ENCODE measurements at regions of chr7 and their contacts with region 1.

Region 1: DNA sequence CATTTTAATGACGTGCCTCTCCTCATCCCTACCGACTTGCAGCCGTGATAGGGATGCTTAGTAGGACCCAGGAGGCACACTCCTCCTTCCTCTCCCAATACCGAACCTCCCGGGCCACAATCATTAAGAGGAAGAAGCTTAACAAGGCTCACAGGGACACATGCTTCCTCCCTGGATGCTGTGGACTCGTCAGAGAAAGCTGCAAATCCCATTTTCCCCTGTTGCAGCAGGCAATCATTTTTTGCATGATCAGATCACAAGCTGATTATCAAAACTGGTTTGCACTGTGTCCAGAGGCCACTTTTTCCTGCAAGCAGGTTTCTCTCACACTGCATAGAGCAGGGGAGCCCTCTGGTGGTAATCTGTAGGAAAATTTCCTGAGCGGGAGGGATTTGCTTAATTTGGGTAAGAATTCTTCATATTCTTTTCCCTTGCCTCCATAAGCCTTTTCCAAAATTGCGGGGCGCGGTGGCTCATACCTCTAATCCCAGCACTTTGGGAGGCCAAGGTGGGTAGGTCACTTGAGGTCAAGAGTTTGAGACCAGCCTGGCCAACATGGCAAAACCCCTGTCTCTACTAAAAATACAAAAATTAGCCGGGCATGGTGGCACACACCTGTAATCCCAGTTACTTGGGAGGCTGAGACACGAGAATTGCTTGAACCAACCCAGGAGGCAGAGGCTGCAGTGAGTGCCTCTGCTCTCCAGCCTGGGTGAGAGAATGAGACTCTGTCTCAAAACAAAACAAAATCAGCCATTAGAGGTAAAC is 16.1 kb upstream of the LAMB4 start:
- DNase-seq: no peak

Region 2: DNA sequence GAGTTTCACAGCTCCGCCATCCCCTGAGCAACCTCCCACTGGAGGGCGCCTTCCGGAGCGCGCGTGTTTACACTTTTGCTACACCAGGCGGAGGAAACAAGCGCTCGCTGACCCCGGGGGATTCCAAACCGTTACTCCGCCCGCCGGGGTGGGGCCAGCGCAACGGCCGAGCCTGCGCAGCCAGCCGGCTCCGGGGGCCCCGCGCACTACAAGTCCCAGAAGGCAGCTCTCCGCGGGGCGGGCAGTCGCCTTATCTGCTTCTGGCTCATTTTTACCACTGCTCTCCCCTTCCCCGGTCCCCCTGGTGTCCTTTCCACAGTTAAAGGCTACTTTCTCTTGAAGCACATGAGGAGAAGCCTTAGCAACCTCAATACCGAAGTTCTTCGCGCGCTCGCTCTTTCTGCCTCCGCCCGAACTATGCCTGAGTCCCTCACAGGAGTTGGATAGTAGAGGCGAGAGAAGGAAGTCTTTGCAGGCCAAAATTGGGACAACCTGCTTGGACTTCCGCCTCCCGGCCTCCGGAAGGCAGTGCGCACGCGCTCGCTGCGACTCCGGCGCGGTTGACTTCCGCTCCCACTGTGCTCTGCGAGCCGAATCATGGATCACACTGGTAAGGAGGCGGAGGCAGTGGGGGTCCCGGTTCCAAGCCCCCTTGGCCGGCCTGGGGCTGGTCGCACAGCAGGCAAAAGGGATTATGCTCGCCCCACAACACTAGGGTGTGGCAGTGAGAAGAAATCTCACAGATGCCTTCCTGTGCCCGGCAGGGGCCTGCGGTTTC is 402.5 kb before region 1 on chr7 and contains the start of gene CBLL1:
- intact Hi-C with region 1: loop called (anchors 10 kb)
- DNase-seq: peak; percentile 98
- total RNA-seq, gene CBLL1: 24.1 TPM

Region 3: GRCh38 chr7:107879400-107880035 is 266.7 kb before region 1 on chr7:
- intact Hi-C with region 1: loop called (anchors 5 kb)
- DNase-seq: no peak

Region 4: DNA sequence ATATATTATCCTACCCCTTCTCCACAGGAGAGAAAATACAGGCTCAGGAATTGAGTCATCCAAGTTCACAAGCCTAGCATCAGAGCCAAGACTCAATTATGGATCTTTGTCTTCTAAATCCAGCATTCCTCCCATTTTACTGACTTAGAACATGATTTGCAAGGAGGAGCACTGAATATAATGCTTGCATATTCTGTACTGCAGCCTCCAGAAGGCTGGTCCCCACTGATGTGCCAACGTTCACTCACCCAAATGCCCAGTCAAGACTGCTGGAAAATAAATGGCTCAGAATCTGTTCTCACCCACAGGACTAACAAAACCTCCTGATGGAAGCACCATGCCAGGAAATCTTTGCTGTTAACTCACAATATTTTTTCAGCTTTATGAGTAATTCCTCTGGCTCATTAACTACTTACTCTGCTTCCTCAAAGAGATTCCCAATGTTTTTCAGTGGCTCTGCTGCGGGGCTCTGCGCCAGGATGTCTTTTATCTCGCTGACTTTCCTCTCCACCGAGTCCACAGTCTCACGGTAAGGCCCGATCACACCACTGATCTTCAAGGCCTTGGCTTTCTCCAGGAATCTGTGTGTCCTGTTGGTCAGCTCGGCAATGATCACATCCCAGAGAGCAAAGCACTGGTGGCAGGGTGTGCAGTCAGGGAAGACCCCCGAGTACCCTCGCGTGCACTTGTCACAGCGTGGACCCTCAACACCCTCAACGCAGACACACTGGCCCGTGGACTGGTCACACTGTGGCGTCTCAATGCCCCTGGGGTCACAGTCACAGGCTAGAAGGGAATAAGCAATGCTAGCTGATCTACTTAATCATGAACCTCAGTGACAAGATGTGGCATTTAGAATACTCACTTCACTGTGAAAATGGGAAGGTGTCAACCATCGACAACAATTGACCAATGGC is 206.4 kb before region 1 on chr7:
- intact Hi-C with region 1: loop called (anchors 10 kb)
- DNase-seq: no peak

Region 5: GRCh38 chr7:108002726-108003598 is 143.3 kb before region 1 on chr7 and contains the start of gene LAMB1:
- intact Hi-C with region 1: loop called (anchors 10 kb)
- DNase-seq: peak; percentile 88
- total RNA-seq, gene LAMB1: 55.1 TPM

Region 6: DNA sequence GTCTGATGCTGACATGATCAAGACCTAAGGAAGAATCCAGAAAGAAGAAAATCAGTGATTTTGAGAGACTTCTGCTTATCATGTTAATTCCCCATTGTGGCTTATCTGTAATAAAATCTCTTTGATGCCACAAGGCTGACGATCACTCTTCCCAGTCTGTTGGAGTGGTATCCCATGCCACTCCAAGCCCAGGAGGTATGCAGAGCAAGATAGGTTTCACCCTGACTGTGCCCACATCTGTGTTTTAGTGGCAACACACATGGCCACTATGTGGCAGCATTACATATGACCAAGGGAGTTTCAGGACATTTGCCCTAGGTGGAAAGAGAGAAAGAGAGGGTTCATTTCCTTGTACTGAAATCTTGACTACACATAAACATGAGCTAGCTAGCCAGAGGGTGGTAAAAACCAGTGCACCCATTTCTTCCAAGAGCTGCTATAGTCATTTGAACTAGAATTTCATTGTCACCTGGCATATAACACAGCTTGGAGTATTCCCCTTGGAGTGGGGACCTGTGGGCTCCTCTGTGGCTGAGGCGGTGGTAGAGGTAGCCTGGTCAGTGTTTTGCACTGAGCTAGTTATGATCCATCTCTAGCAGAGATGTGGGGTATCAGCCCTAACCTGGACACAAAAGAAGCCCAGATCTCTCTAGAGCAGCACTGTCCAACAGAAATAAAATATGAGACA is 36.9 kb before region 1 on chr7:
- intact Hi-C with region 1: loop called (anchors 5 kb)
- DNase-seq: no peak

Region 7: DNA sequence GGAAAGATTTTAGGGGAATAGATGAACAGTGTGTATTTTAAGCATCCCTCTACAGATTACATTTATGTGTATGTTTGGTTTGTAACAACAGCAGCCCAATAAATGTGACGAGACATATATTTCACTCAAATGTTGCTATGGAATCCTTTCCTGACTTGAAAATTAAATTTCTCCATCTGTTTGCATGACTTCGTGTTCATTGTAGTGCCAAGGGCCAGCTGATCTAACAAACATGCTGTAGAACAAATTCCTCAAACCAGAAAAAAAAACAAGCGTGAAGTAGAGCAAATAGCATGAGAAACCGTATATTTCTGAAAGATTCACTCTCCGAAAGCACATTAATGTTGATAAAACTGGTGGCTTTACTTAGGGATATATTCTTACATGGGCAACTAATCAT is 222.2 kb after region 1 on chr7:
- intact Hi-C with region 1: no loop called
- DNase-seq: no peak

Measured in cardiac septum (tissue), 1 donor.